Dorsolateral prefrontal cortex (tissue), 120 donors: ENCODE measurements at regions of chr17 and their contacts with region 1.

Region 1: DNA sequence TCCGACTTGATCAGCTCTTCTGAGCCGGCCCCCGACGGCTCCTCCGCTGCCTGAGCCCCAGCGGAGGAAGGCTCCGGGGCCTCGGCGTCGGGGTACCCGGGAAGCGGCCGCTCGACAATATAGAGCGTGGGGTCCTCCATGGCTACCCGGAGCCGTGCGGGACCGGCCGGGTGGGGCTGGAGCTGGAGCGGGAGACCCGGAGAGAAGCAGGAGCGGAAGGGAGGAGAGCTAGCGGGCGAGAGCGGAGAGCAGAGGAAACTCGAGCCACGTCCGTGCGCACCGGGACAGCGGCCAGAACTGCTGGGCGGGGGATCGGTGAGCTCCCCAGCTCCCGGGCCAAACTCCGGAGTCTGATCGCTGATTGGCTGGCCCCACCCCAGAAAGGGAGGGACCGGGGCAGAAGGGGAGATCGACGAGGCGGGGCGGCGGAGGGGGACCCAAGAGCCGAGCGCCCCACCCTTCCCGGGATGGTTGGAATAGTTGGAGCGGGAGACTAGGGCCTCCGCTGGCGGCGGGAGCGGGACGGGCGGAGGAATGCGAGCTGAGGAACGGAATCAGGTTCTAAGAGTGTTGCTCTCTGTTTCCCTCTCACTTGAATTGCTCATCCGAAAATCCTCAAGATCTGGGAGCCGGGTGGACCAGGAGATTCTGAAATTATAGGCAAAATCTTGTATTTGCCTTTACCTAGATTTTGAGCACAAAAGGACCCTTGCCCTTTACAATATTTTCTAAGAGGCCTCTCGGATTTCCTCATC is at the start of gene CAVIN1:
- DNase-seq: peak; percentile 80 to 98 (median 89)
- H3K4me3 ChIP-seq: peak within 1 kb of the TSS; percentile 38 to 90 (median 74)
- H3K27ac ChIP-seq: peak within 1 kb of the TSS in 57 of 59 donors; percentile 30 to 93 (median 79)
- H3K27me3 ChIP-seq: peaks cover 0 to 26% (median 5%) of the 10 kb centered on the region in 45 donors
- CTCF ChIP-seq: peak in 11 of 56 donors; percentile 8 to 32 (median 14)
- total RNA-seq, gene CAVIN1: 11.5 to 70.8 (median 30.0) TPM

Region 2: DNA sequence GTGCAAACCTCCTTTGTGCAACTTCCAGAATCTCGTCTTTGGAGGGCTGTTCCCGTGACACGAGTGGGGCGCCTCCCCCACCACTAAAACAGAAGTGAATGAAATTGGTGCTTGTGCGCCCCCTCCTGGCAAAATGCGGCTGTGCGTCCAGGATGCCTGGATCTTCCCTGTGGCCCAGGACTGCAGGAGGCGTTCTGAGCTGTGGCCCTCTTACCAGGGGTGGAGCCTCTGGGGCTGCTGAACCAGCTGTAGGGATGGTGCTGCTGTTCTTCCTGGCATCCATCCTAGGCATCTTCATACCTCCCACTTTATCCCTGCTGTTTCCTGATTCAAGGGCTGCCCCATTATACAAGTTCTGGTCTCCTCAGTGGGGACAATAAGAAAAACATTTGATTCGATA is 94.4 kb after region 1 on chr17:
- intact Hi-C with region 1: loop called in 1 of 2 experiments (anchors 5 kb)
- DNase-seq: peak; percentile 62 to 91 (median 81)
- H3K4me3 ChIP-seq: peak overlapping the region in 1 of 59 donors; percentile 9
- H3K27ac ChIP-seq: peak overlapping the region in 58 of 59 donors; percentile 52 to 98 (median 90)
- H3K27me3 ChIP-seq: no peaks in the 10 kb centered on the region
- CTCF ChIP-seq: peak; percentile 57 to 96 (median 88)

Region 3: GRCh38 chr17:42577532-42578281 is 154.6 kb after region 1 on chr17 and contains the start of gene PSMC3IP:
- intact Hi-C with region 1: no loop called
- DNase-seq: peak; percentile 89 to 97 (median 96)
- H3K4me3 ChIP-seq: peak within 1 kb of the TSS; percentile 56 to 99 (median 82)
- H3K27ac ChIP-seq: peak within 1 kb of the TSS in 58 of 59 donors; percentile 6 to 95 (median 87)
- H3K27me3 ChIP-seq: no peaks in the 10 kb centered on the region
- CTCF ChIP-seq: peak in 54 of 56 donors; percentile 13 to 71 (median 46)
- total RNA-seq, gene PSMC3IP: 1.4 to 11.5 (median 5.9) TPM